Ovary (tissue), 10 donors: ENCODE measurements at regions of chr3 and their contacts with region 1.

Region 1: DNA sequence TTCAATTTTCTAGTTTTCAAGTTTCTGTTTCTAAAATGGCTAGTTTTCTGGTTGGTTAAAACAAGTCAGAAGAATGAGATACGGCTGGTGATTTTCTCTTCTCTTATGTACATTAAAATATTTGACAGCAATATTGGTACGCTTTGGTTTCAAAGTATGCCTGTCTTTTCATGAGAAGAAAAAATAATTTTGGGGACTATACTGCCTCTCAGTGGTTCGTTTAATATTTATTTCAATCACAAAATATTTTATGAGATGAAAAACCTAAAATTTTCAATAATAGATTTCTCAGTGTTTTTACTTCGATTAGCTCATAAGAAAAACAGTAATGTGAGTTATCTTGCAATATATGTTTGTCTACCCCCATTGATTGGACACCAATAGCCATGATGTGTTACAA is 72.8 kb upstream of the AADACL2 start:
- DNase-seq: no peak
- H3K4me3 ChIP-seq: no peak overlapping the region
- H3K27ac ChIP-seq: no peak overlapping the region
- H3K4me1 ChIP-seq: no peaks in the 10 kb centered on the region
- H3K27me3 ChIP-seq: no peaks in the 10 kb centered on the region
- CTCF ChIP-seq: peak in 2 of 3 donors; percentile 47 to 61
- EP300 ChIP-seq: no peak
- POLR2A ChIP-seq: no peak

Region 2: DNA sequence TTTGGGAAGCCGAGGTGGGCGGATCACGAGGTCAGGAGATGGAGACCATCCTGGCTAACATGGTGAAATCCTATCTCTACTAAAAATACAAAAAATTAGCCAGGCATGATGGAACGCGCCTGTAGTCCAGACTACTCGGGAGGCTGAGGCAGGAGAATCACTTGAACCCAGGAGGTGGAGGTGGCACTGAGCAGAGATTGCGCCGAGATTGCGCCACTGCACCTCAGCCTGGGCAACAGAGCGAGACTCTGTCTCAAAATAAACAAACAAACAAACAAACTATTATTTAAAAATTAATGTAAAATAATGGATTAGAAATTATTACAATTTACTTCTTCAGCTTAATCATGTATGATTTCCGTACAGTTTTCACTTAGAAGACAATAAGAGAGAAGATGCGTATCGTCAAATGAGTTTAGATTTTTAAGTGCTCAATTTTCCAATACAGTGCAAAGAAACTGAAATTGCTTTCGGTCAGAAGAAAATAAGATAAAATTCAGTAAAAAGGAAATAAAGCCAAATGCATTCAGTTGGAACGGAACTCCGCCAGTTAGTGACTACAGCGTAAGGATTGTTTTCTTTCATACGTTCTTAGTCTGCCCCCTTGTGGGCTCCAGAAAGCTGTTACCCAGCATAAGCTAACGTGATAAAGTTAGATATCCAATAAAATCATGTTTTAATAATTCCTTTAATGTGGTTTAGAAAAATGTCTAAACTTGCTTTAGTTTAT is 177.9 kb after region 1 on chr3:
- intact Hi-C with region 1: loop called in 2 of 4 experiments (anchors 10 kb)
- DNase-seq: peak in 4 of 5 donors; percentile 30 to 70 (median 44)
- H3K4me3 ChIP-seq: peak overlapping the region; percentile 8
- H3K27ac ChIP-seq: no peak overlapping the region
- H3K4me1 ChIP-seq: no peaks in the 10 kb centered on the region
- H3K27me3 ChIP-seq: no peaks in the 10 kb centered on the region
- CTCF ChIP-seq: peak; percentile 61 to 87 (median 84)
- EP300 ChIP-seq: no peak
- POLR2A ChIP-seq: no peak